Heart left ventricle (tissue), 16 donors: ENCODE measurements at regions of chr2 and their contacts with region 1.

Region 1: GRCh38 chr2:135004005-135004746 is 43.1 kb downstream of the MAP3K19 start:
- DNase-seq: peak; percentile 64 to 85 (median 75)
- ATAC-seq: peak; percentile 81 to 99 (median 98)
- H3K4me3 ChIP-seq: no peak overlapping the region
- H3K27ac ChIP-seq: no peak overlapping the region
- H3K4me1 ChIP-seq: peaks cover 0 to 7% (median 0%) of the 10 kb centered on the region in 12 donors
- H3K27me3 ChIP-seq: peaks cover 0 to 26% (median 5%) of the 10 kb centered on the region in 9 donors
- CTCF ChIP-seq: peak; percentile 82 to 96 (median 89)
- POLR2A ChIP-seq: no peak

Region 2: GRCh38 chr2:134679745-134680144 is 324.4 kb before region 1 on chr2:
- intact Hi-C with region 1: no loop called
- DNase-seq: no peak
- ATAC-seq: no peak
- H3K4me3 ChIP-seq: no peak overlapping the region
- H3K27ac ChIP-seq: no peak overlapping the region
- H3K4me1 ChIP-seq: peaks cover 0 to 43% (median 9%) of the 10 kb centered on the region in 12 donors
- H3K27me3 ChIP-seq: no peaks in the 10 kb centered on the region
- CTCF ChIP-seq: no peak
- POLR2A ChIP-seq: no peak

Region 3: DNA sequence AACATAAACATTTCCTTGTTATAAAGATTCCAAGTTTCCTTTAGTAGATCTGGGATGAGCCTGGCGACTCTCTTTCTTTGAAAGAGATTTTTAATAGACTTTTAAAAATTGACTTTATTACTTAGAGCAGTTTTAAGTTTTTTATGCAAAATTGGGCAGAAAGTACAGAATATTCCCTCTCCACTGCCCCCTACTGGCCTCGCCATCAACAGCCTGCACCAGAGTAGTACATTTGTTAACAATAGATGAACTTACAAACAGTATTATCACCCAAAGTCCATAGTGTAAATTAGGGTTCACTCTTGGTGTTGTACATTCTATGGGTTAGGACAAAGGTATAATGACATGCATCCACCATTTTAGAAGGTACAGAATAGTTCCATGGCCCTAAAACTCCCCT is 39.2 kb after region 1 on chr2:
- intact Hi-C with region 1: no loop called
- DNase-seq: no peak
- ATAC-seq: no peak
- H3K4me3 ChIP-seq: no peak overlapping the region
- H3K27ac ChIP-seq: no peak overlapping the region
- H3K4me1 ChIP-seq: peaks cover 0 to 3% (median 0%) of the 10 kb centered on the region in 12 donors
- H3K27me3 ChIP-seq: peaks cover 0 to 3% (median 0%) of the 10 kb centered on the region in 9 donors
- CTCF ChIP-seq: peak in 10 of 12 donors; percentile 8 to 59 (median 34)
- POLR2A ChIP-seq: no peak

Region 4: GRCh38 chr2:135124924-135125886 is 121.0 kb after region 1 on chr2:
- intact Hi-C with region 1: loop called in 1 of 10 experiments (anchors 10 kb)
- DNase-seq: no peak
- ATAC-seq: no peak
- H3K4me3 ChIP-seq: no peak overlapping the region
- H3K27ac ChIP-seq: no peak overlapping the region
- H3K4me1 ChIP-seq: peaks cover 0 to 9% (median 0%) of the 10 kb centered on the region in 12 donors
- H3K27me3 ChIP-seq: no peaks in the 10 kb centered on the region
- CTCF ChIP-seq: no peak
- POLR2A ChIP-seq: no peak

Region 5: DNA sequence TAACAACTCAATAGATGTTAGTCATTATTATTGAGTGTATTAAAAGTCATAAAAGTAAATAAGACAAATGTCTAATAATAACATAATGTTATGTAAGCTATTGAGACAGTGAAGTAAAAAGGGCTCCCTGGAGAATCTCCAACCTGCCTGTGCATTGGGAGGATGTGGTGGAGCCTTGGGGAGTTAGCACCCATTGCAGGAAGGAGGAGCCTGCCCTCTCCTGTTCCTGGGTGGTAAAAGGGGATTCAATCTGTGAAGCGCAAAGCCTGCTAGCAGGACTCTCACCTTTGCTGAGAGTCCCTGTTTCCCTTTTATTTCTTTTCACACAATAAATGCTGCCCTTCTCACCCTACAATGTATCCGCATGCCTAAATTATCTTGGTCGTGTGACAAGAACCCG is 254.0 kb after region 1 on chr2:
- intact Hi-C with region 1: loop called in 2 of 10 experiments (anchors 5 to 10 kb)
- DNase-seq: no peak
- ATAC-seq: no peak
- H3K4me3 ChIP-seq: no peak overlapping the region
- H3K27ac ChIP-seq: no peak overlapping the region
- H3K4me1 ChIP-seq: no peaks in the 10 kb centered on the region
- H3K27me3 ChIP-seq: no peaks in the 10 kb centered on the region
- CTCF ChIP-seq: no peak
- POLR2A ChIP-seq: no peak

Region 6: GRCh38 chr2:135600915-135601314 is 596.7 kb after region 1 on chr2:
- intact Hi-C with region 1: loop called in 2 of 10 experiments (anchors 10 kb)
- DNase-seq: no peak
- ATAC-seq: no peak
- H3K4me3 ChIP-seq: no peak overlapping the region
- H3K27ac ChIP-seq: no peak overlapping the region
- H3K4me1 ChIP-seq: no peaks in the 10 kb centered on the region
- H3K27me3 ChIP-seq: no peaks in the 10 kb centered on the region
- CTCF ChIP-seq: peak in 9 of 12 donors; percentile 10 to 47 (median 25)
- POLR2A ChIP-seq: no peak

Region 7: GRCh38 chr2:135709992-135710391 is 705.8 kb after region 1 on chr2:
- intact Hi-C with region 1: loop called (anchors 1 to 5 kb)
- DNase-seq: peak; percentile 28 to 66 (median 50)
- ATAC-seq: peak in 1 of 4 donors; percentile 54
- H3K4me3 ChIP-seq: no peak overlapping the region
- H3K27ac ChIP-seq: no peak overlapping the region
- H3K4me1 ChIP-seq: no peaks in the 10 kb centered on the region
- H3K27me3 ChIP-seq: no peaks in the 10 kb centered on the region
- CTCF ChIP-seq: peak in 11 of 12 donors; percentile 91 to 99 (median 95)
- POLR2A ChIP-seq: no peak

Region 8: GRCh38 chr2:135797497-135798274 is 793.5 kb after region 1 on chr2:
- intact Hi-C with region 1: loop called in 2 of 10 experiments (anchors 5 to 10 kb)
- DNase-seq: peak; percentile 63 to 78 (median 74)
- ATAC-seq: peak; percentile 48 to 85 (median 82)
- H3K4me3 ChIP-seq: no peak overlapping the region
- H3K27ac ChIP-seq: peak overlapping the region in 1 of 12 donors; percentile 25
- H3K4me1 ChIP-seq: peaks cover 0 to 11% (median 0%) of the 10 kb centered on the region in 12 donors
- H3K27me3 ChIP-seq: no peaks in the 10 kb centered on the region
- CTCF ChIP-seq: peak; percentile 70 to 93 (median 88)
- POLR2A ChIP-seq: no peak